ENCODE measurements at regions of chr20 and their contacts with region 1.

Region 1: GRCh38 chr20:62136283-62137091 is 6.7 kb downstream of the PSMA7 start:
- DNase-seq: peak in 1 of 3 donors; percentile 57
- ATAC-seq: peak; percentile 29 to 49 (median 42)
- H3K4me3 ChIP-seq: no peak overlapping the region
- H3K27ac ChIP-seq: peak overlapping the region in 1 of 3 donors; percentile 14
- H3K4me1 ChIP-seq: peaks cover 0 to 27% (median 11%) of the 10 kb centered on the region in 4 donors
- H3K27me3 ChIP-seq: no peaks in the 10 kb centered on the region
- CTCF ChIP-seq: peak; percentile 46 to 85 (median 76)
- POLR2A ChIP-seq: no peak

Region 2: GRCh38 chr20:62010551-62011402 is 125.7 kb before region 1 on chr20:
- intact Hi-C with region 1: loop called (anchors 10 kb)
- DNase-seq: peak in 1 of 3 donors; percentile 49
- ATAC-seq: peak; percentile 58 to 80 (median 75)
- H3K4me3 ChIP-seq: no peak overlapping the region
- H3K27ac ChIP-seq: no peak overlapping the region
- H3K4me1 ChIP-seq: no peaks in the 10 kb centered on the region
- H3K27me3 ChIP-seq: no peaks in the 10 kb centered on the region
- CTCF ChIP-seq: peak; percentile 69 to 72 (median 72)
- POLR2A ChIP-seq: no peak

Region 3: DNA sequence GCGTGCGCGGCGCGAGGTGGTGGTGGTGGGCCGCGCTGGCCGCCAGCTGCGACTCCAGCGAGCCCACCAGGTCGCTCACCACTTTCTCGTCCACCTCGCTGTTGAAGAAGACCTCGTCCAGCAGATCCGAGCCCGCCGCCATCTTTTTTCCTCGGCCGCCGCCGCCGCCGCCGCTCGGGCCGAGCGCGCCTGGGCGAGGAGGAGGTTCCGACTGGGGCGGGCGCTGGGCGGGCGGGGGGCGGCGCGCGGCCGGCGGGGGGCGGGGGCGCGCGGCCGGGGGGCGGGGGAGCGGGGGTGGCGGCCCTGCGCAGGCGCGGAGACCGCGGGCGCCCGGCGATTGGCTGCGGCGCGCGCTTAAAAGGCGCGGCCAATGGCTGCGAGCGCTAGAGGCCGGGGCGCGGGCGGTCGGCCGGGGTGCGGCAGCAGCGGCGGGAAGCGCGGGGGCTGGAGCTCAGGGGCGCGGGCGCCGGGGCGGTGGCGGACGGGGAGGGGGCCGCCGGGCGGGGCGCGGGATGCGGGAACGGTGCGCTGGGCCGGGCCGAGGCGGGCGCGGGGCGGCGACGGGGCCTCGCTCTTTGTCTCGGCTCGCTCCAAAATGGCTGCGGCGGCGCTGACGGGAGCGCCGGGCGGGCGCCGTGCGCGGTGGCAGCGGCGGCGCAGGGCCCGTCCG is 70.7 kb before region 1 on chr20 and contains the start of gene TAF4:
- intact Hi-C with region 1: loop called in 1 of 2 experiments (anchors 5 kb)
- DNase-seq: peak; percentile 82 to 83 (median 83)
- ATAC-seq: peak; percentile 59 to 76 (median 64)
- H3K4me3 ChIP-seq: peak within 1 kb of the TSS; percentile 55 to 69 (median 68)
- H3K27ac ChIP-seq: peak within 1 kb of the TSS; percentile 52 to 85 (median 73)
- H3K4me1 ChIP-seq: peaks cover 0 to 23% (median 5%) of the 10 kb centered on the region in 4 donors
- H3K27me3 ChIP-seq: no peaks in the 10 kb centered on the region
- CTCF ChIP-seq: no peak
- POLR2A ChIP-seq: peak; percentile 89
- total RNA-seq, gene TAF4: 9.0 to 13.0 (median 11.3) TPM

Region 4: DNA sequence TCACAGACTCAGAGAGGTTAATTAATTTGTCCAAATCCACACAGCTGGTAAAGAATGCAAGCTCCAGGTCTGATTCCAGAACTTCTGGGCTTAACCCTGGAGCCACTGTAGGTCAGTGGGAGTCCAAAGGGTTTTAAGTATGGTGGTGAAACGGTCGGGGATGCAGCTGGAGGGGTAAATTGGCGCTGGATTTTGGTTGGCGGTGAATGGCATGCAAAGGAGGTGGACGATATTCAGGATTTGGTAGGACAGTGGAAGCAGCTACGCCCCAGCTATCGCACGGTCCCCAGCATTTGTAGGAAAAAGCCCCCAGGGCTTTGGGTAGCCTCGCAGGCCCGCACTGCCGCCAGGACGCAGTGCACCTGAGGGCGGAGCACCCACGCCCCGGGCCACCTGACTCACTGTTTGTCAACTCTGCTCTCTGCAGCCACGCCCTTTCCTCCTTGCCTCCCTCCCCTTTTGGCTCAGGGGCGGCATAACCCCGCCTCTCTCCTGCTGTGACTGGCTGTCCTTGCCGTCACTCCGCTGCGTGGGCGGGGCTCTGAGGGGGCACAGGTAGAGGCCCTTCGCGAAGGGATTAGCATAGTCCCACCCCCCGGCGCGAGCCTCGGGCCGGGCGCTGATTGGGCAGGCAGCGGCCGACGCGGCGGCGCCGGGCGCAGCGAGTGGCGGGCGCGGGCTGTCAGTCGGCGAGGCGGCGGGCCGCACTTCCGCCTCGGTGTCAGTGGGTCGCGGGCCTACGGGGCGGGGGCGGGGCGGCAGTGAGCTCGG is 101.5 kb after region 1 on chr20 and contains the start of gene OSBPL2:
- intact Hi-C with region 1: no loop called
- DNase-seq: peak; percentile 99 to 100 (median 100)
- ATAC-seq: peak; percentile 97 to 99 (median 98)
- H3K4me3 ChIP-seq: peak within 1 kb of the TSS; percentile 70 to 81 (median 70)
- H3K27ac ChIP-seq: peak within 1 kb of the TSS; percentile 44 to 78 (median 77)
- H3K4me1 ChIP-seq: peaks cover 0 to 15% (median 3%) of the 10 kb centered on the region in 4 donors
- H3K27me3 ChIP-seq: no peaks in the 10 kb centered on the region
- CTCF ChIP-seq: no peak
- POLR2A ChIP-seq: peak; percentile 55
- total RNA-seq, gene OSBPL2: 15.6 to 27.8 (median 21.2) TPM